Heart right ventricle (tissue), 16 donors: ENCODE measurements at regions of chr18 and their contacts with region 1.

Region 1: DNA sequence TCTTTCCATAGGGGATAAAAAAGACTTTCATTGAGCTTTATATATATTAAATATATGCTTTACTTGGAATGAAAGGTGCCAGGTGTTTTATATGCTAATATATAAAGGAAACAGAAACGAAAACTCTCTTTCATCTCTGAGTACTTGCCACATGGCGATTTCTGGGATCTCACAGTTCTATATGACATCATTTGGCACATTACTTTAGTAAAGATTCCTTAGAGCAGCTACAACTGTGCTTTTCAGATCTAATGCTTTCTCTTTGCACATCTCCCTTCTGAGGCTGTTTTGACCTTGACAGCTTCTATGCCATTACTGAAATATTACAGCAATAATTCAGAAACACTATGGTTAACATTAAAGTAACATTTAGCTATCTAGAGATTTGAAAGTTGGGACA is 1082.9 kb upstream of the CDH2 start:
- DNase-seq: no peak
- ATAC-seq: no peak
- H3K4me3 ChIP-seq: no peak overlapping the region
- H3K27ac ChIP-seq: no peak overlapping the region
- H3K4me1 ChIP-seq: no peaks in the 10 kb centered on the region
- H3K27me3 ChIP-seq: no peaks in the 10 kb centered on the region
- CTCF ChIP-seq: no peak

Region 2: GRCh38 chr18:28961669-28962228 is 298.1 kb before region 1 on chr18:
- intact Hi-C with region 1: no loop called
- DNase-seq: peak in 1 of 2 donors; percentile 5
- ATAC-seq: no peak
- H3K4me3 ChIP-seq: no peak overlapping the region
- H3K27ac ChIP-seq: no peak overlapping the region
- H3K4me1 ChIP-seq: no peaks in the 10 kb centered on the region
- H3K27me3 ChIP-seq: no peaks in the 10 kb centered on the region
- CTCF ChIP-seq: peak; percentile 12 to 63 (median 49)

Region 3: DNA sequence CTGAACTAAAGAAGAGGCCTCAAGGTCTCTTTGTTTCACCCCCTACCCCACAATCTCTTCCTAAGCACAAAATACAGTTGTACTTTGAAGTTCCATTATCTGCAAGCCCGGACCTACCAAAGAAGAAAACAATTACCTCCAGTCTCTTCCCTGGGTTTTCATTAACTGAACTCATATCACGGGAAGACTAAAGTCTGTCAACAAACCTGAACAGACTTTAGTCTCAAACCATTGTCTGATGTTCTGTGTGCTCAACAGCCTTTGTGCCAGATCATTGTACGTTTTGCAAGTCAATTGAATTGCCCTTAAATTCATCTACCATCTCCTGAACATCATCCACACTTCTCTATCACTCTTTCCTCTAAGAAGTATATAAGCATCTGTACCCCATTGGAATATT is 61.0 kb before region 1 on chr18:
- intact Hi-C with region 1: loop called in 1 of 10 experiments (anchors 10 kb)
- DNase-seq: no peak
- ATAC-seq: no peak
- H3K4me3 ChIP-seq: no peak overlapping the region
- H3K27ac ChIP-seq: no peak overlapping the region
- H3K4me1 ChIP-seq: no peaks in the 10 kb centered on the region
- H3K27me3 ChIP-seq: no peaks in the 10 kb centered on the region
- CTCF ChIP-seq: no peak